Sigmoid colon (tissue), 7 donors: ENCODE measurements at regions of chr6 and their contacts with region 1.

Region 1: DNA sequence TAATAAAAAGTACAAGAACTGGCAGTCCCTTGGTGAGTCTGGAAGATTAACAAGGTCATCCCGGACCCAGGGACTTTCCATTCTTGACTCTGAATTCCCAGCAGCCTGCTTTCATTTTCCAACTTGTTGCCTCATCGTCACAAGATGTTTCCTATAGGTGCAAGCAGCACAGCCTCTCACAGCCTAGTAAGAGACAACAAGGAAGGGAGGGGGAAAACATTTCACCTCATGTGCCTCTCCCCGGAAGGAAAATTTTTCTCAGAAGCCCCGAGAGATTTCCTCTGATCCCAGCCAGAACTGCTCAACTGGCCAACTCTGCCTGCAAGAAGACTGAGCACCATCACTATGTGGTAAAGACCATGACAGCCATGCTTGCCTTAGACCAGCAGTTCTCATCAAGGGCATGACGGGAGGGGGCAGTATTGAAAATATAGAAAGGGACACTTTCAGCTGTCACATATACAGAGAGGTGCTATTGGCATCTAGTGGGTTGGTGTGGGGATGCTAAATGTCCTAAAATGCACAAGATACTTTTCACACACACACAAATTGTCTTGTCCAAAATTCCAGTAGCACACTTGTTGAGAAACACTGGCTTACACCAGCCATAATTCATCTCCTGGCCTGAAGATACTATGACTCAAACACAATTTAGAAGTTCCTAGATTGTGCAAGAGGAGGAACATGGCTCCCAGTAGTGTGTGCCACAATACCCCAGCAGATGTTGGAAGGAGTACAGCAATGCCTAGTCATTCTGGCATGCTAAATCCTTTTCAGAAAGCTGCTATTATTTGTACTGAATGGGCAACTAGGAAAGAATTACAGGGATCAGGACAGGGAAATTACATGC is 10.8 kb upstream of the WTAP start:
- DNase-seq: peak; percentile 89
- H3K4me3 ChIP-seq: peak overlapping the region in 2 of 4 donors; percentile 13 to 22
- H3K27ac ChIP-seq: peak overlapping the region; percentile 82 to 90 (median 86)
- H3K4me1 ChIP-seq: peaks cover 0 to 34% (median 32%) of the 10 kb centered on the region in 4 donors
- H3K27me3 ChIP-seq: no peaks in the 10 kb centered on the region
- CTCF ChIP-seq: no peak
- EP300 ChIP-seq: peak; percentile 19 to 91 (median 66)
- POLR2A ChIP-seq: no peak

Region 2: DNA sequence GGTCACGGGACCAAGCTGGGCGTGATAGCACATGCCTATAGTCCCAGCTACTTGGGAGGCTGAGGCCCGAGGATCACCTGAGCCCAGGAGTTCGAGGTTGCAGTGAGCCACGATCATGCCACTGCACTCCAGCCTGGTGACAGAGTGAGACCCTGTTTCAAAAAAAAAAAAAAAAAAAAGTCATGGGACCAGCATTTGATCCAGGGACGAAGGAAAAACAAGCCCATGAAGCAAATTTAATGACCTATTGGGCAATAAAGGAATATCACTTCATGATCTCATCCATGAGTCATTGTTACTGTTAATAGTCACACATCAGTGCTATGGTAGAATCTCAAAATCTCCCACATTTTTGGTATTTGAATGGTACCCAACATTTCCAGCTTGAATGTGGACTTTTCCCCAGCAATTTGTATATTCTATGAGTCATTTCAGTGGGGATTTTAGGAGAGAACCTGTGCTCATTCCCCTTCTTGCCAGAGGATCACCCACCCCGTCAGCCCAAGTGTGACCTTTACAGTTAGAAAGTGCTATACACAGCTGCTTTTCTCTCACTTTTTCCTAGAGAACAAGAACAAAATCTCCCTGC is 15.0 kb before region 1 on chr6:
- intact Hi-C with region 1: loop called (anchors 2 kb)
- DNase-seq: peak; percentile 80
- H3K4me3 ChIP-seq: no peak overlapping the region
- H3K27ac ChIP-seq: peak overlapping the region; percentile 61 to 79 (median 77)
- H3K4me1 ChIP-seq: peaks cover 0 to 15% (median 15%) of the 10 kb centered on the region in 4 donors
- H3K27me3 ChIP-seq: no peaks in the 10 kb centered on the region
- CTCF ChIP-seq: no peak
- EP300 ChIP-seq: peak in 2 of 4 donors; percentile 65 to 86
- POLR2A ChIP-seq: no peak

Region 3: DNA sequence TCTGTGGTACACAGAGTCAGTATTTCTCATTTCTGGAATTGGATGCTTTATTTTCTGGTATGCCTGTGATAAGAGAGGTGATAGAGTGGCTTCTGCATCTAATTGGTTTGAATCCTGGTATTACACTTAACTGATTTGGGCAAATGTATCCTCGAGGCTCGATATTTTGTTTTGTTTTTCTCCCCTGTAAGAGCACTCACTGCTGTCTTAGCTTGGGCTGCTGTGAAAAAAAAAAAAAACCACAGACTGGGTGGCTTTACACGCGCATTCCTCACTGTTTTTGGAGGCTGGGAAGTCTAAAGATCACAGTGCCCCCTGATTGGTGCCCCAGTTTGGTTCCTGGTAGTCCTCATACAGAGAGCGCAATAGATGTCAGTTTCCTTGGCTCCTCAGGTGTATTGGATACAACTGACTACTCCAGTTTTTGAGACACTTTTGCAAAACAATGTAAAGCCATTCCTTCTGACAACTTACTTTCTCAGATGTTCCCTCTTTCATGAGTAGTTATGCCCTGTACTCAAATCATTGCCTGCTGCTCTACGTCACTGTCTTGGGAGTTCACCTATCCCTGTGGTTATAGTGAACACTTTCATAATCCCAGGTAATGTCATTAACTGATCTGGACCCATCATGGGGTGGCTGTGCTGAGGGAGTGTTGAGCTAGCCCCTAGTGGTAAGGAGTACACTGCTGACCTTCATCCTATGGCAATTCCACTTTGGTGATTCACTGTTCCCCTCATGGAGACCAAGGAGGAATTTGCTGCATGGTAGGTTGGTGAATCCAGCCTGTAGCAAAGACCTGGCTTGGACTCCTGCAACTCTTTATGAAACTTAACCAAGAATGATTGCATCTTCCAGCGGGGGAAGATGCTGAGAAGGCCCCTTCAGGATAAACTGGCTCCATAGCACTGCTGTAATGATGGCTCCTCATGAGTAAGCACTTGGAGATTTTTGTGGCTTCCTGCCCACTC is 41.8 kb after region 1 on chr6:
- intact Hi-C with region 1: no loop called
- DNase-seq: no peak
- H3K4me3 ChIP-seq: no peak overlapping the region
- H3K27ac ChIP-seq: peak overlapping the region in 1 of 4 donors; percentile 5
- H3K4me1 ChIP-seq: peaks cover 0 to 20% (median 12%) of the 10 kb centered on the region in 4 donors
- H3K27me3 ChIP-seq: no peaks in the 10 kb centered on the region
- CTCF ChIP-seq: no peak
- EP300 ChIP-seq: no peak
- POLR2A ChIP-seq: no peak